Naive thymus-derived CD4-positive, alpha-beta T cell (primary cell): ENCODE measurements at regions of chr11 and their contacts with region 1.

Region 1: GRCh38 chr11:63573881-63574855 is 11.0 kb upstream of the PLAAT2 start:
- DNase-seq: peak in 4 of 9 donors; percentile 30 to 41 (median 35)
- ATAC-seq: peak; percentile 82
- H3K4me3 ChIP-seq: peak overlapping the region; percentile 43
- H3K4me3 Mint-ChIP-seq: peak overlapping the region; percentile 77 to 95 (median 88)
- H3K27ac ChIP-seq: peak overlapping the region; percentile 33
- H3K27ac Mint-ChIP-seq: peak overlapping the region; percentile 81 to 99 (median 93)
- H3K4me1 ChIP-seq: peaks cover 12 to 13% of the 10 kb centered on the region in 2 donors
- H3K4me1 Mint-ChIP-seq: peaks cover 18 to 40% (median 30%) of the 10 kb centered on the region in 7 donors
- H3K27me3 ChIP-seq: no peaks in the 10 kb centered on the region
- H3K27me3 Mint-ChIP-seq: peaks cover 0 to 19% (median 0%) of the 10 kb centered on the region in 5 donors

Region 2: GRCh38 chr11:63530021-63530420 is 44.1 kb before region 1 on chr11:
- CTCF ChIA-PET with region 1: no interaction called
- POLR2A ChIA-PET with region 1: interaction called, 23 read pairs
- intact Hi-C with region 1: loop called in 1 of 2 experiments (anchors 2 kb)
- DNase-seq: no peak
- ATAC-seq: no peak
- H3K4me3 ChIP-seq: no peak overlapping the region
- H3K4me3 Mint-ChIP-seq: peak overlapping the region in 7 of 10 donors; percentile 17 to 55 (median 39)
- H3K27ac ChIP-seq: peak overlapping the region; percentile 41
- H3K27ac Mint-ChIP-seq: peak overlapping the region; percentile 60 to 90 (median 85)
- H3K4me1 ChIP-seq: peaks cover 39 to 52% of the 10 kb centered on the region in 2 donors
- H3K4me1 Mint-ChIP-seq: peaks cover 35 to 69% (median 67%) of the 10 kb centered on the region in 7 donors
- H3K27me3 ChIP-seq: no peaks in the 10 kb centered on the region
- H3K27me3 Mint-ChIP-seq: peaks cover 0 to 2% (median 0%) of the 10 kb centered on the region in 5 donors

Region 3: GRCh38 chr11:63553741-63554151 is 20.4 kb before region 1 on chr11:
- CTCF ChIA-PET with region 1: interaction called, 3 read pairs
- POLR2A ChIA-PET with region 1: interaction called, 9 read pairs
- intact Hi-C with region 1: loop called in 1 of 2 experiments (anchors 1 kb)
- DNase-seq: peak in 7 of 9 donors; percentile 41 to 61 (median 53)
- ATAC-seq: peak; percentile 85
- H3K4me3 ChIP-seq: peak overlapping the region; percentile 51
- H3K4me3 Mint-ChIP-seq: peak overlapping the region; percentile 78 to 95 (median 88)
- H3K27ac ChIP-seq: peak overlapping the region; percentile 54
- H3K27ac Mint-ChIP-seq: peak overlapping the region; percentile 88 to 100 (median 96)
- H3K4me1 ChIP-seq: peaks cover 35 to 51% of the 10 kb centered on the region in 2 donors
- H3K4me1 Mint-ChIP-seq: peaks cover 33 to 81% (median 77%) of the 10 kb centered on the region in 7 donors
- H3K27me3 ChIP-seq: no peaks in the 10 kb centered on the region
- H3K27me3 Mint-ChIP-seq: no peaks in the 10 kb centered on the region